ENCODE measurements at regions of chr6 and their contacts with region 1.

Region 1: DNA sequence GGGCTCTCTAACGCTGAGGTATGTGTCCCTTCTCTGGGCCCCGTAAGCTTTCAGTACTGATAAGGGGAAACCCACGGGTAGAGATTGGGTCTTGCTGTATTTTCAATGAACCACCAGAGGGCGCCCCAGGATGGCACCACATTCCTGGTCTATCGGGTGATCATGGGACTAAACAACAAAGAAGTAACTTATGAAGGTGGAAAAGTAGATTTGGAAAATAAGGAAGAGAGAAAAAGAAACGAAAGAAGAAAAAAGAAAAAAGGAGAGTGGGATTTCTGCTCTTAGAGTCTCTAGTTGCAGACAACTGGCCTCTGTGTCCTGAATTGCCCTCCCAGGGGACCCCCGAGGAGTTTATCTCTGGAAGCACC is 93.8 kb downstream of the GMPR start:
- DNase-seq: peak; percentile 87
- H3K4me3 ChIP-seq: no peak overlapping the region
- H3K27ac ChIP-seq: peak overlapping the region in 3 of 4 donors; percentile 6 to 33 (median 26)
- H3K4me1 ChIP-seq: peaks cover 9 to 31% (median 15%) of the 10 kb centered on the region in 4 donors
- H3K27me3 ChIP-seq: no peaks in the 10 kb centered on the region
- CTCF ChIP-seq: peak; percentile 91 to 93 (median 92)
- EP300 ChIP-seq: no peak
- POLR2A ChIP-seq: no peak

Region 2: GRCh38 chr6:15522427-15522826 is 809.7 kb before region 1 on chr6:
- in situ Hi-C with region 1: no loop called
- intact Hi-C with region 1: no loop called
- DNase-seq: no peak
- H3K4me3 ChIP-seq: no peak overlapping the region
- H3K27ac ChIP-seq: peak overlapping the region in 3 of 4 donors; percentile 1 to 40 (median 39)
- H3K4me1 ChIP-seq: peaks cover 0 to 8% (median 3%) of the 10 kb centered on the region in 4 donors
- H3K27me3 ChIP-seq: no peaks in the 10 kb centered on the region
- CTCF ChIP-seq: no peak
- EP300 ChIP-seq: no peak
- POLR2A ChIP-seq: no peak

Region 3: GRCh38 chr6:16409531-16410441 is 77.6 kb after region 1 on chr6:
- in situ Hi-C with region 1: loop called in 2 of 4 experiments (anchors 10 kb)
- intact Hi-C with region 1: loop called (anchors 5 kb)
- DNase-seq: peak; percentile 74
- H3K4me3 ChIP-seq: no peak overlapping the region
- H3K27ac ChIP-seq: no peak overlapping the region
- H3K4me1 ChIP-seq: peaks cover 11 to 58% (median 20%) of the 10 kb centered on the region in 4 donors
- H3K27me3 ChIP-seq: no peaks in the 10 kb centered on the region
- CTCF ChIP-seq: peak; percentile 74 to 84 (median 75)
- EP300 ChIP-seq: no peak
- POLR2A ChIP-seq: no peak

Region 4: GRCh38 chr6:16514249-16514648 is 182.1 kb after region 1 on chr6:
- in situ Hi-C with region 1: loop called in 2 of 4 experiments (anchors 10 to 25 kb)
- intact Hi-C with region 1: no loop called
- DNase-seq: no peak
- H3K4me3 ChIP-seq: no peak overlapping the region
- H3K27ac ChIP-seq: peak overlapping the region in 3 of 4 donors; percentile 15 to 49 (median 43)
- H3K4me1 ChIP-seq: peaks cover 8 to 35% (median 16%) of the 10 kb centered on the region in 4 donors
- H3K27me3 ChIP-seq: no peaks in the 10 kb centered on the region
- CTCF ChIP-seq: peak; percentile 34 to 49 (median 39)
- EP300 ChIP-seq: no peak
- POLR2A ChIP-seq: no peak

Region 5: GRCh38 chr6:16761471-16762267 is 429.5 kb after region 1 on chr6:
- in situ Hi-C with region 1: loop called in 3 of 4 experiments (anchors 5 to 25 kb)
- intact Hi-C with region 1: loop called (anchors 5 kb)
- DNase-seq: peak; percentile 91
- H3K4me3 ChIP-seq: peak overlapping the region; percentile 60 to 95 (median 89)
- H3K27ac ChIP-seq: peak overlapping the region; percentile 99 to 100 (median 100)
- H3K4me1 ChIP-seq: peaks cover 0 to 59% (median 24%) of the 10 kb centered on the region in 4 donors
- H3K27me3 ChIP-seq: no peaks in the 10 kb centered on the region
- CTCF ChIP-seq: peak in 2 of 5 experiments; percentile 9 to 28
- EP300 ChIP-seq: no peak
- POLR2A ChIP-seq: peak; percentile 52

Region 6: DNA sequence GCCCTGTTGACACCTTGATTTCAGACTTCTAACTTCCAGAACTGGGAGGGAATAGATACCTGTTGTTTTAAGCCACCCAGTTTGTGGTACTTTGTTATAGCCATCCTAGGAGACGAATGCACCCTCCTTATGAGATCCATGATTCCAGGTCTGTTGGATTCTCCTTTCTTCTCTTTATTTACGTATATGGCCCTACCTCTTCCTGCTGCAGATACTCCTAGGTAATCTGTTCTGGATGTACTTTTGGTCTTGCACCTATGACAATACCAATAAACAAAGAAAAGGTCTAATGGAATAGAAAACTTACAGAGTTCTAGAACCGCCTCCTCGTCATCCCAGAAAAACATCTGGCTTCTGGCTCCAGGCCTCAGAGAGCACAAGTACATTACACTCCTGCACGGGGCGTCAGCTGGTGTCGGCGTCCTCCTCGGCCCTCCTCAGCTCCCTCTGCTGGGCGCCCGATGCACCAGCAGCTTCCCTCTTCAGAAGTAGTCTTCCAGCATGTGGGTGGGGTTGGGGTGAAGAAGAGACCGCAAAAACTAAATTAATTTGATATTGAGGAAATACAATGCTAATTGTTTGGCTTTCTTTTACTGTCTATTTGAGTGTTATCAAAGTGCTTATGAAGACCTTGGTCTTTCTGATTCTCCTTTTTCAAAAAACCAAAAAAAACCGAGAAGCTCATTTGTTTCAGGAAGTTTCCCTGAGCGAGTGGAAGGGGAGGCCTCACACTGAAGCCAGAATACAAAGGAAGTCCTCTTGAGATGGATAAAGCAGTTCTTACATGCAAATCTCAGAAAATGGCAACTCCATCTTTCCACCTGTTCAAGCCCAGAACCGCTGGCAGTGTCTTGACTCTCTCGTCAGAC is 438.8 kb after region 1 on chr6:
- in situ Hi-C with region 1: loop called (anchors 5 to 25 kb)
- intact Hi-C with region 1: no loop called
- DNase-seq: peak; percentile 83
- H3K4me3 ChIP-seq: no peak overlapping the region
- H3K27ac ChIP-seq: peak overlapping the region; percentile 52 to 77 (median 70)
- H3K4me1 ChIP-seq: peaks cover 10 to 40% (median 24%) of the 10 kb centered on the region in 4 donors
- H3K27me3 ChIP-seq: no peaks in the 10 kb centered on the region
- CTCF ChIP-seq: peak; percentile 87 to 96 (median 90)
- EP300 ChIP-seq: no peak
- POLR2A ChIP-seq: no peak

Region 7: GRCh38 chr6:16964553-16965501 is 632.7 kb after region 1 on chr6:
- in situ Hi-C with region 1: loop called in 2 of 4 experiments (anchors 10 to 25 kb)
- intact Hi-C with region 1: no loop called
- DNase-seq: peak; percentile 70
- H3K4me3 ChIP-seq: no peak overlapping the region
- H3K27ac ChIP-seq: no peak overlapping the region
- H3K4me1 ChIP-seq: peaks cover 0 to 7% (median 0%) of the 10 kb centered on the region in 4 donors
- H3K27me3 ChIP-seq: peaks cover 6% of the 10 kb centered on the region
- CTCF ChIP-seq: peak; percentile 80 to 91 (median 85)
- EP300 ChIP-seq: no peak
- POLR2A ChIP-seq: no peak